Head of caudate nucleus (tissue), 42 donors: ENCODE measurements at regions of chr18 and their contacts with region 1.

Region 1: DNA sequence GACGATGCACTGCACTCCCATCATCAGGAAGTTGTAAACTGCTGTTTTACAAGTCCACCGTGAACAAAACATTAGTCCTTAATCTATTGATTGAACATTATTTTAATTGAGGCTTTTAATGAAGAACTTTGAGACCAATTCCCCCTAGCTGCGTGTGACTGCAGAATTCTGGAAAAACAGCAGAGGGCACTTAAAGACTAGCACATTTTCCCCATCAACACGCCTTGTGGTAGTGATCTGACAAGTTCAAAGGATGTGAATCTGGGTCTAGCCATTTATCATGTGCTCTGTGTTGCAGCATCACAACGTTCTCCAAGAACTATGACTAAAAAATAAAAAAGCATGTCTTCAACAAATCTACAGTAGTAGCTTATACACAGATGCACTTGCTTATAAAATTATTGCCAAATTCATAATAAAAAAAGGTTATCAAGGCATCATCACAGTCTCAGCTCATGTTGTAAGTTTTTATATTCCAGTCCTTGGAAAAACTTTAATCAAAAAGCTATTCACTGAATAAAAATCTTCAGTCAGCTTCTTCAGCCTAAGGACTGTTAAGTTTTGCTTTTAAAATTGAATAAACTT is 35.8 kb downstream of the SKOR2 start:
- DNase-seq: peak in 36 of 42 donors; percentile 5 to 75 (median 42)

Region 2: DNA sequence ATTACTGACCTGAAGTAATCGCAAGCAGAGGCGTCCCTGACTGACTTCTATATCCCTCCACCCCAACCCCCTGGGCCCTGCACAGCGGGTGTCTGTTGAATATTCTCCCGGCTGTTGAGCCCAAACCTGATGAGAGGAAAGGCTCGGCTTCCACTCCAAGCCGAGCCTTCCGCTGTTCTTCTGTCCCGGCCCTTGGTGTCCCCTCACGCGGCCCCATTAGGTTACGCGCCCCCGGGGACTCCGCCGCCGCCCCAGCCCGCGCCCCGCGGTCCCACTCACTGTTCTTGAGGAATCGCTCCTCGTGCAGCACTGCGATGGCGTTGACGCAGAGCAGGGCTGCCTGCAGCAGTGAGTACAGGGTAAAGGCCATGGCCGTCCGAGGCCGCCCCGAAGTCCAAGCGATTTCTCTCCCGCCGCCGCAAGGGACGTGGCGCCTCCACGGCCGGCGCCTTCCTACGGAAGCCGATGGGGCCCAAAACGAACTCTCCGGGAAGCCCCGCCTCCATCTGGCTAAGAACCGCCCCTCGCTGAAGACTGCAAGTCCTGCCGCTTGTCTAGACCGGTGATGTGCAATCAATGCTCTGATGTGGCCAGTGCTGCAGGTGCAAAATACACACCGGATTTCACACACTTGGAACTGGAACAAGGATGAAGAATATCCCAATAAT is 39.6 kb before region 1 on chr18 and contains the start of gene IER3IP1:
- intact Hi-C with region 1: no loop called
- DNase-seq: peak; percentile 79 to 97 (median 92)

Region 3: DNA sequence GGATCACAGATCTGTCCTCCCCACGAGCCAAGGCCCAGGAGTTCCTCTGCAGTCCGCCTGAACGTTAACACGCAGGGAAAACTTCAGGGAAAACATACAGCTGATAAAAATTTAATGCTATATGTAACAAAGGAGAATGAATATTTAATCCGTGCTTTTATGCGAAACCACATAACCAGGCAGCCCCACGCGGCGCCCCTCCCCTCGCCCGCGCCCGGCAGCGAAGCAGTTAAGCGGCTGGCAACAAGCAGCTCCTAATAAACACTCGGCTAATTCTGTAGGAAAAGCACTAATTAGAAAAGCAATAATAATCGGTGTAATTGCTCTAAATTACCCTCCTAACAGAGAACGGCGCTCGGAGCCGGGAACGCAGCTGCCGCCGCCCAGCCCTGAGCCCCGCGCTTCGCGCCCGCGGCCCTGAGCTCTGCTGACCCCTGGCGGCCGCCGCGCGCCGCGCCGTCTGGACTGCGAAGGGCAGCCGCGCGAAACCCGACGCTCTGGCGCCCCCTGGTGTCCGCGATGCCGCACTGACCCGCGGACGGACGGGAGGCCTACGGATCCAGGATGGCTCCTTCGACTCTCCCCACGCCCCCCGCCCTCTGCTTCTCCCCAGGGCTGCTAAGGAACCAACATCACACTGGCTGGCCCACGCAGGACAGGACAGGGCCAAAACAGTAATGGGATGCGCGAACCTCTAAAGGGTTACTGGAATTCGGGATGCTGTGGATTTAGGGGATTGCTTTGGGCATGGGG is 533.4 kb after region 1 on chr18:
- intact Hi-C with region 1: loop called (anchors 5 kb)
- DNase-seq: peak; percentile 26 to 93 (median 80)